ENCODE measurements at regions of chr17 and their contacts with region 1.

Region 1: GRCh38 chr17:50151041-50151936 is 812 bp upstream of the PPP1R9B start:
- DNase-seq: peak; percentile 86 to 89 (median 89)
- H3K4me3 ChIP-seq: peak overlapping the region; percentile 82
- H3K27ac ChIP-seq: peak overlapping the region; percentile 77 to 81
- H3K4me1 ChIP-seq: peaks cover 32% of the 10 kb centered on the region
- H3K27me3 ChIP-seq: no peaks in the 10 kb centered on the region
- CTCF ChIP-seq: peak in 2 of 3 donors; percentile 52 to 68
- EP300 ChIP-seq: no peak
- POLR2A ChIP-seq: no peak

Region 2: GRCh38 chr17:48544349-48545021 is 1606.8 kb before region 1 on chr17:
- intact Hi-C with region 1: loop called in 1 of 4 experiments (anchors 5 kb)
- DNase-seq: peak in 4 of 5 donors; percentile 30 to 68 (median 44)
- H3K4me3 ChIP-seq: peak overlapping the region; percentile 54
- H3K27ac ChIP-seq: peak overlapping the region; percentile 35 to 54
- H3K4me1 ChIP-seq: no peaks in the 10 kb centered on the region
- H3K27me3 ChIP-seq: no peaks in the 10 kb centered on the region
- CTCF ChIP-seq: no peak
- EP300 ChIP-seq: no peak
- POLR2A ChIP-seq: no peak

Region 3: DNA sequence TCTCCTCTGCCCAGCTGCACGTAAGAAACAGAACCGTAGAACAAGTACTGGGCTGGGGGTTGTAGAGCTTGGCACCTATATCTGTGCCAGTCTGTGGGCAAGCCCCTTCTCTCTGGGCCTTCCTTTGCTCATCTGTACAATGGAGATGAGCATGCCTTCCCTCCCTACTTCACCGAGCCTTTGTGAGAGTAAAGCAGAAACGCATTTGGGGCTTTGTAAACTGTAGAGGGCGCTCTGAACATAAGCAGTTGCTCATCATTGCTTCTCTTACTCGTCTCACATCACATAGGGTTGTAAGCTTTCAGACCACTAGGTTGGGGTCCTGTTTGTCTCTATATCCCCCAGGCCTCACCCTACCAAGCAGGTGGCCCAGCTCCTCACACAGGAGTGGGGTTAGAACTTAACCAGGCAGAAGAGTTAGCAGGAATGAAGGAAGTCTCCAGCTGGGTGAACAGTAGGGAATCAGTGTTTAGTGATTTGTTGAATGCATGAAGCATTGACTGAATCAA is 36.4 kb before region 1 on chr17:
- intact Hi-C with region 1: loop called in 1 of 4 experiments (anchors 2 kb)
- DNase-seq: no peak
- H3K4me3 ChIP-seq: no peak overlapping the region
- H3K27ac ChIP-seq: no peak overlapping the region
- H3K4me1 ChIP-seq: peaks cover 8% of the 10 kb centered on the region
- H3K27me3 ChIP-seq: no peaks in the 10 kb centered on the region
- CTCF ChIP-seq: peak in 1 of 3 donors; percentile 10
- EP300 ChIP-seq: no peak
- POLR2A ChIP-seq: no peak

Region 4: DNA sequence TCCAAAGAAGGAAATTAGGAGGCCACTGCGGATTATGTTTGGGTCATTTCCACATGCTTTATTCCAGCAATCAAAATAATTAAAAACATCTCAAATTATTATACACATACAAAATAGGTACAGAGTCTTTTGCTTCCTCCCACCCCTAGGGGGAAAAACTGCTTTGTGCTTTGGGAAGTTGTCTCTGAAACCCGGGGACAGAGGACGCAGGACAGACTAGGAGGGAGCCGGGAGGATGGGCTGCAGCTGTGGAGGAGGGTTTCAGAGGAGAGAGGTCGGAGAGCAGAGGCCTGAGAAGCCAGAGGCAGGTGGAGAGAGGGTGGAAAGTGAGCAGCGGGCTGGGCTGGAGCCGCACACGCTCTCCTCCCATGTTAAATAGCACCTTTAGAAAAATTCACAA is 32.8 kb after region 1 on chr17:
- intact Hi-C with region 1: loop called in 1 of 4 experiments (anchors 2 kb)
- DNase-seq: no peak
- H3K4me3 ChIP-seq: no peak overlapping the region
- H3K27ac ChIP-seq: peak overlapping the region; percentile 52 to 55
- H3K4me1 ChIP-seq: peaks cover 2% of the 10 kb centered on the region
- H3K27me3 ChIP-seq: no peaks in the 10 kb centered on the region
- CTCF ChIP-seq: peak in 1 of 3 donors; percentile 33
- EP300 ChIP-seq: no peak
- POLR2A ChIP-seq: no peak

Region 5: GRCh38 chr17:50213026-50214022 is 62.0 kb after region 1 on chr17:
- intact Hi-C with region 1: no loop called
- DNase-seq: peak in 4 of 5 donors; percentile 14 to 31 (median 24)
- H3K4me3 ChIP-seq: no peak overlapping the region
- H3K27ac ChIP-seq: peak overlapping the region in 1 of 2 donors; percentile 95
- H3K4me1 ChIP-seq: peaks cover 34% of the 10 kb centered on the region
- H3K27me3 ChIP-seq: no peaks in the 10 kb centered on the region
- CTCF ChIP-seq: no peak
- EP300 ChIP-seq: no peak
- POLR2A ChIP-seq: no peak